ENCODE measurements at regions of chr17 and their contacts with region 1.

Region 1: GRCh38 chr17:63946440-63947367 is 14.6 kb upstream of the CD79B start:
- DNase-seq: peak; percentile 45 to 84
- ATAC-seq: peak; percentile 58 to 88; a peak in 5 of 6 replicates
- H3K4me3 ChIP-seq: no peak overlapping the region
- H3K27ac ChIP-seq: no peak overlapping the region
- H3K4me1 ChIP-seq: no peaks in the 10 kb centered on the region
- CTCF ChIP-seq: peak; percentile 77
- EP300 ChIP-seq: no peak
- POLR2A ChIP-seq: no peak
- RAD21 ChIP-seq: peak; percentile 51 to 57

Region 2: GRCh38 chr17:63848834-63849700 is 97.6 kb before region 1 on chr17:
- CTCF ChIA-PET with region 1: no interaction called
- POLR2A ChIA-PET with region 1: no interaction called
- DNase-seq: peak; percentile 99
- ATAC-seq: peak; percentile 94 to 96
- H3K4me3 ChIP-seq: peak overlapping the region; percentile 28
- H3K27ac ChIP-seq: peak overlapping the region; percentile 74 to 86
- H3K4me1 ChIP-seq: no peaks in the 10 kb centered on the region
- CTCF ChIP-seq: peak; percentile 88
- EP300 ChIP-seq: no peak
- POLR2A ChIP-seq: no peak
- RAD21 ChIP-seq: no peak

Region 3: DNA sequence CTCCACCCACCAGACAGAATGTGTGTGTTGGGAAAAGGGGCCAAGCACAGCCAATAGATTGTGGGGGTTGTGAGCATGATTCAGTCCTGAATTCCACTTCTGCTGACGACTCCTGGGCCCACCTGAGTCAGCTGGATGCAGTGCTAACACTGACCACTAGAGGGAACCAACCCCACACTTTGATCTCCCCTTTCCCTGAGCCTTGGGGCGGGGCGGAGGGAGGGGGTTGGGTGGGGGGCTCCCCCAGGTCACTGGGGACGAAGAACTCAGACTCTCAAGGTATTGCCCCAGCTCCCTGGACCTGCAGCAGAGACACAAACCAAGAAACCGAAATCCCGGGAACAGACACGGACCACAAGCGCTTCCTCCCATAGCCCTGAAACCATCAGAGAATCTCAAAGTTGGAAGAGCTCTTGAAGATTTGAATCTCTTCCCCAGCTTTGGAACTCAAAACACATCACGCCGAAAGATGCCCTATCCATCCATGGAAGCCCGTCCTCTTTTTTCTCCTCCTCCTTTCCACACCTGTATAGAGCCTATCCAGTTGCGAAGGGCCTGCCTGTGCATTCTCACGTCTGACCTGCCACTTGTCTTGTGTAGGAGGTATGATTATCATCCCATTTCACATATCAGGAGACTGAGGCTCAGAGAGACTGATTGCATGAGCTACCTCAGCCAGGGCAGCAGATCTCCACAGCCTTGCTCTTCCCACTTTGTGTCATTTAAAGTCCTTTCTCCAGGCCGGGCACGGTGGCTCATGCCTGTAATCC is 34.9 kb before region 1 on chr17:
- CTCF ChIA-PET with region 1: interaction called, 105 read pairs
- POLR2A ChIA-PET with region 1: no interaction called
- DNase-seq: peak; percentile 41 to 63
- ATAC-seq: peak; percentile 63 to 84; a peak in 3 of 6 replicates
- H3K4me3 ChIP-seq: no peak overlapping the region
- H3K27ac ChIP-seq: no peak overlapping the region
- H3K4me1 ChIP-seq: no peaks in the 10 kb centered on the region
- CTCF ChIP-seq: peak; percentile 90
- EP300 ChIP-seq: no peak
- POLR2A ChIP-seq: no peak
- RAD21 ChIP-seq: peak; percentile 59 to 80

Region 4: GRCh38 chr17:63931099-63931561 is 15.6 kb before region 1 on chr17:
- CTCF ChIA-PET with region 1: interaction called, 60 read pairs
- POLR2A ChIA-PET with region 1: interaction called, 5 read pairs
- DNase-seq: no peak
- ATAC-seq: peak in 1 of 2 experiments; percentile 41; a peak in 3 of 6 replicates
- H3K4me3 ChIP-seq: no peak overlapping the region
- H3K27ac ChIP-seq: no peak overlapping the region
- H3K4me1 ChIP-seq: no peaks in the 10 kb centered on the region
- CTCF ChIP-seq: no peak
- EP300 ChIP-seq: no peak
- POLR2A ChIP-seq: no peak
- RAD21 ChIP-seq: no peak

Region 5: DNA sequence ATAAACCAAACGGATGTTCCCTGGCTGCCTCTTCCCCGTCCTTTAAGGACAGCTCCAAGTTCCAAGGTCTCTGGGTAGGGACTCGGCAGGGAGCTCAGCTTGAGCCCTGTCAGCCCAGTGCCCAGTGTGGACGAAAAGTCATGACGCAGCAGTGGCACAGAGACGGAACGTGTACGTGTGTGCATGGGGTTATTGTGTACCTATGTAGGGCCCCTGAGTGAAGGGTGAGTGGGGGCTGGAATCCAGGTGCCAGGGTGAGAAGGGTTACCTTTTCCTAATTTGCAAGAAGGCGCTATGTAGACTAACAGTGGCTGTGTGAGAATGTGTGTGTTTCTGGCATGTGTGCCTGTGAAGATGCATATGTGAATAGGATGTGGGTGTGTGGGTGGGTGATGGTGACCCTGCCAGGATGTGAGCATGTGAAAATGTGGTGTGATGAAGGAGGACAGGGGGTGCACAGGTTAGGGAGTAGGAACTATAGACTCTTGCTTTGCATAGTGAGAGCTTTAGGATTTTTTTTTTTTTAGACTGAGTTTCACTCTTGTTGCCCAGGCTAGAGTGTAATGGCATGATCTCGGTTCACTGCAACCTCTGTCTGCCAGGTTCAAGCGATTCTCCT is 20.1 kb after region 1 on chr17:
- CTCF ChIA-PET with region 1: interaction called, 29 read pairs
- POLR2A ChIA-PET with region 1: no interaction called
- DNase-seq: no peak
- ATAC-seq: 0 out of 6 replicates have a peak, but pooled peaks of 1 of the 2 experiments have one; percentile 25
- H3K4me3 ChIP-seq: no peak overlapping the region
- H3K27ac ChIP-seq: no peak overlapping the region
- H3K4me1 ChIP-seq: 0 out of 3 replicates have a peak, but pooled peaks cover 2% of the 10 kb centered on the region
- CTCF ChIP-seq: no peak
- EP300 ChIP-seq: no peak
- POLR2A ChIP-seq: no peak
- RAD21 ChIP-seq: no peak

Region 6: DNA sequence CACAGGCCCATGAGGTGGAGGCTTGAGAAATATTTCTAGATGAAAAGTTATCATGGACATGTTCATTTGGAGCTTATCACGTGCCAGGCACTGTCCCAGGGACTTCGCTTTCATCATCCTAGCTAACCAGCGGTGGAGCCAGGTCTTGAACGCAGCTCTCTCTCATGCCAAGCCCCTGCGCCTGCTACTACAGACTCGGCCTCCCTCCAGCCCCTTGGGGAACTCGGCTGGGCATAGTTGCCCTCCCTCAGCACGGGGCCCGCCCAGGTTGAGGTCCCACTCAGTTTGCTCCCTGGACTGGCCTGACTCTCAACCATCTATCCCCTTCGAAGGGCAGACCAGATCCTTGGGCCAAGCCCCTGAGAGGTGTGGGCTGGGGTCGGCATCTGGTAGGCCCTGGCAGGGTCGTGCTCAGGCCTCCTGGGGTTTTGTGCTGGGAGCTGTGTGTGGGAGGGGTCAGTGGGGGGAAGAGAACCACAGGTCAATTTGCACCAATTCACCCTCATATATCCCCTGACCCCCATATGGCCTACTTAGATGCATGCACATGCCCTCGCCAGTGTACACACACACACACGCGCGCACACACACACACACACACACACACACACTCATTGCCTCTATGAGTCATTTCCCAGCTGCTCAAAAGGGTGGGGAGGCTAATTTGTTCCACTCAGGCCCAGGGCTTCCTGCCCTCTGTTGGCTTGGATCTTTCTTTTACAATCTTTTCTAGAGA is 38.1 kb after region 1 on chr17:
- CTCF ChIA-PET with region 1: interaction called, 34 read pairs
- POLR2A ChIA-PET with region 1: no interaction called
- DNase-seq: peak in 1 of 2 experiments; percentile 41
- ATAC-seq: no peak
- H3K4me3 ChIP-seq: no peak overlapping the region
- H3K27ac ChIP-seq: no peak overlapping the region
- H3K4me1 ChIP-seq: peaks cover 6% of the 10 kb centered on the region; the same call in 1 of the 3 replicates
- CTCF ChIP-seq: no peak
- EP300 ChIP-seq: no peak
- POLR2A ChIP-seq: no peak
- RAD21 ChIP-seq: no peak